MCF 10A (cell line): ENCODE measurements at regions of chr2 and their contacts with region 1.

Region 1: GRCh38 chr2:68467077-68467960 is at the starts of genes APLF and FBXO48:
- DNase-seq: peak; percentile 100
- H3K4me3 Mint-ChIP-seq: peak within 1 kb of the TSS; percentile 95
- H3K27ac Mint-ChIP-seq: peak within 1 kb of the TSS; percentile 98
- H3K4me1 Mint-ChIP-seq: peaks cover 30% of the 10 kb centered on the region
- H3K27me3 Mint-ChIP-seq: no peaks in the 10 kb centered on the region
- CTCF ChIP-seq: no peak
- total RNA-seq, gene APLF: 4.0 TPM in 2 replicates
- total RNA-seq, gene FBXO48: 1.7 and 2.1 TPM in 2 replicates

Region 2: GRCh38 chr2:68487773-68488355 is 20.5 kb after region 1 on chr2:
- CTCF ChIA-PET with region 1: interaction called, 16 read pairs
- POLR2A ChIA-PET with region 1: interaction called, 10 read pairs
- intact Hi-C with region 1: no loop called
- DNase-seq: peak; percentile 43
- H3K4me3 Mint-ChIP-seq: peak overlapping the region; percentile 28
- H3K27ac Mint-ChIP-seq: no peak overlapping the region
- H3K4me1 Mint-ChIP-seq: peaks cover 6% of the 10 kb centered on the region
- H3K27me3 Mint-ChIP-seq: no peaks in the 10 kb centered on the region
- CTCF ChIP-seq: peak; percentile 40

Region 3: GRCh38 chr2:68709421-68709911 is 242.1 kb after region 1 on chr2:
- CTCF ChIA-PET with region 1: interaction called, 49 read pairs
- POLR2A ChIA-PET with region 1: interaction called, 3 read pairs
- intact Hi-C with region 1: no loop called
- DNase-seq: peak; percentile 60
- H3K4me3 Mint-ChIP-seq: no peak overlapping the region
- H3K27ac Mint-ChIP-seq: no peak overlapping the region
- H3K4me1 Mint-ChIP-seq: no peaks in the 10 kb centered on the region
- H3K27me3 Mint-ChIP-seq: peaks cover 43% of the 10 kb centered on the region
- CTCF ChIP-seq: peak; percentile 66

Region 4: DNA sequence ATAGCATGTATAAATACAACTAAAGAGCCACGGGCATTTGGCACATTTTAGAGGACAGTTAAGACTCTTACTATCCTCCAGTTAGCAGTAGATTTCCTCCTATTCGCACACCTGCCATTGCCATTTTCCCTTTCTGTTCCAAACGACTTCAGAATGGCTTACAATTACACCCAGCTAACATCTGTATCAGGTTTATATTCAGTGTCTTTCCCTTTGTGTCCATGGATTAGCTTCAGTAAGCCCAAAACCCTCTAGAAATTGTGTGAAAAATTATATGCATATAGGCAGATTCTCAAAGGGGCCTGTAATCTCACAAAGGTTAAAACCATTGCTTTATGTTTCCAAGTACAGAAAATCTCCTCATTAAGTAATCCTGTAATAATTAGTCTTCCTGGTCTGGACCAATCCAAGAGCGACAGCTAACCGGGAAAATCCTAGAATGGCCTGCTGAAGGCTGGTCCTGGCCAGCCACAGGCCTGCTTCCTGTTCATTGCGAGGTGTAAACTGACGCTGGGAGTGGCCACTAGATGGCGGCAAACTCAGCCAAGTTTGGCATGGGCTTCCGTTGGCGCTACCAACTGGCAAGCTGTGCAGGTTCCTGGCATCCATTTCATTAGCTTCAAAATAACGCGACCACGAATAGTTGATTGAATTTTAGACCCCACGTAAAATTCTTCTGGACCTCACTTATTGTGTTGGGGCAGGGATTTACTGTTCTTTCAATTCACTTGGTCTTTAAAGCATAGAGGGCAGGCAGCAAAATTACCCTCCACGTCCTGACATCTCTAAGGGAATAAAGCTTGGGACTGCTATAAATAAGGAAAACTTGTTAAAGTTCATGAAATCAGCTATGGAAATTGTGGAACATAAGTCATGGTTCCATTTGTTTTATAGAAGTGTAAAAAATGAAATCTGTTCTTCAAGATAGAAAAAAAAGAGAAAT is 284.3 kb after region 1 on chr2:
- CTCF ChIA-PET with region 1: interaction called, 5 read pairs
- POLR2A ChIA-PET with region 1: interaction called, 4 read pairs
- intact Hi-C with region 1: loop called (anchors 10 kb)
- DNase-seq: peak; percentile 90
- H3K4me3 Mint-ChIP-seq: no peak overlapping the region
- H3K27ac Mint-ChIP-seq: peak overlapping the region; percentile 28
- H3K4me1 Mint-ChIP-seq: peaks cover 17% of the 10 kb centered on the region
- H3K27me3 Mint-ChIP-seq: no peaks in the 10 kb centered on the region
- CTCF ChIP-seq: peak; percentile 91

Region 5: GRCh38 chr2:68909793-68910674 is 442.7 kb after region 1 on chr2:
- CTCF ChIA-PET with region 1: interaction called, 10 read pairs
- POLR2A ChIA-PET with region 1: interaction called, 3 read pairs
- intact Hi-C with region 1: no loop called
- DNase-seq: peak; percentile 84
- H3K4me3 Mint-ChIP-seq: no peak overlapping the region
- H3K27ac Mint-ChIP-seq: no peak overlapping the region
- H3K4me1 Mint-ChIP-seq: peaks cover 18% of the 10 kb centered on the region
- H3K27me3 Mint-ChIP-seq: no peaks in the 10 kb centered on the region
- CTCF ChIP-seq: peak; percentile 89